ENCODE measurements at regions of chr16 and their contacts with region 1.

Region 1: DNA sequence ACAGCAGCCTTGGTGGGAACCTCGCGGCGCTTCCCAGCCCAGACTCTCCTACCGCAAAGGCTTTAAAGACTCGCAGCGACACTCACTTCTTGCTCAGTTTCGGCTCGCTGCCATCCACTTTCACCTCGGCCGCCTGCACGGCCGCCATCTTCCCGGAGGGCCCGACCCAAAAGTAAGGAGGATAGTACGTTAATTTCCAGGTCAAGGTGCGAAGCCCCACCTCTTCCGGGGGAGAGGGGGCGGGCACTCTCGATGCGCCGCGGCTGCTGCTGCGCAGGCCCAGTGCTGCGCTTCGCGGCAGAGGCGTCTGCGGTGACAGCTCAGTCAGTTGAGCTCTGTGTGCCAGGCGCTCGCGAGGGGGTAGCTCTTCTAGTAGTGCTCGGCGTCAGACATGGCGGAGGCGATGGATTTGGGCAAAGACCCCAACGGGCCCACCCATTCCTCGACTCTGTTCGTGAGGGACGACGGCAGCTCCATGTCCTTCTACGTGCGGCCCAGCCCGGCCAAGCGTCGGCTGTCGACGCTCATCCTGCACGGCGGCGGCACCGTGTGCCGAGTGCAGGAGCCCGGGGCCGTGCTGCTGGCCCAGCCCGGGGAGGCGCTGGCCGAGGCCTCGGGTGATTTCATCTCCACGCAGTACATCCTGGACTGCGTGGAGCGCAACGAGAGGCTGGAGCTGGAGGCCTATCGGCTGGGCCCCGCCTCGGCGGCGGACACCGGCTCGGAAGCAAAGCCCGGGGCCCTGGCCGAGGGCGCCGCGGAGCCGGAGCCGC is at the starts of genes KARS1 and TERF2IP:
- DNase-seq: peak; percentile 93 to 94
- H3K4me3 ChIP-seq: peak within 1 kb of the TSS; percentile 84 to 100 (median 89)
- H3K27ac ChIP-seq: peak within 1 kb of the TSS; percentile 99 to 100 (median 99)
- H3K4me1 ChIP-seq: peaks cover 35 to 46% of the 10 kb centered on the region in 2 donors
- H3K27me3 ChIP-seq: no peaks in the 10 kb centered on the region
- CTCF ChIP-seq: no peak
- POLR2A ChIP-seq: peak; percentile 89 to 99
- total RNA-seq, gene KARS1: 82.9 to 105 (median 95.4) TPM
- total RNA-seq, gene TERF2IP: 96.4 to 115 (median 106) TPM

Region 2: GRCh38 chr16:75764154-75764768 is 116.6 kb after region 1 on chr16:
- intact Hi-C with region 1: loop called (anchors 10 kb)
- DNase-seq: peak; percentile 68 to 69
- H3K4me3 ChIP-seq: no peak overlapping the region
- H3K27ac ChIP-seq: no peak overlapping the region
- H3K4me1 ChIP-seq: no peaks in the 10 kb centered on the region
- H3K27me3 ChIP-seq: no peaks in the 10 kb centered on the region
- CTCF ChIP-seq: peak; percentile 34 to 94 (median 82)
- POLR2A ChIP-seq: no peak

Region 3: DNA sequence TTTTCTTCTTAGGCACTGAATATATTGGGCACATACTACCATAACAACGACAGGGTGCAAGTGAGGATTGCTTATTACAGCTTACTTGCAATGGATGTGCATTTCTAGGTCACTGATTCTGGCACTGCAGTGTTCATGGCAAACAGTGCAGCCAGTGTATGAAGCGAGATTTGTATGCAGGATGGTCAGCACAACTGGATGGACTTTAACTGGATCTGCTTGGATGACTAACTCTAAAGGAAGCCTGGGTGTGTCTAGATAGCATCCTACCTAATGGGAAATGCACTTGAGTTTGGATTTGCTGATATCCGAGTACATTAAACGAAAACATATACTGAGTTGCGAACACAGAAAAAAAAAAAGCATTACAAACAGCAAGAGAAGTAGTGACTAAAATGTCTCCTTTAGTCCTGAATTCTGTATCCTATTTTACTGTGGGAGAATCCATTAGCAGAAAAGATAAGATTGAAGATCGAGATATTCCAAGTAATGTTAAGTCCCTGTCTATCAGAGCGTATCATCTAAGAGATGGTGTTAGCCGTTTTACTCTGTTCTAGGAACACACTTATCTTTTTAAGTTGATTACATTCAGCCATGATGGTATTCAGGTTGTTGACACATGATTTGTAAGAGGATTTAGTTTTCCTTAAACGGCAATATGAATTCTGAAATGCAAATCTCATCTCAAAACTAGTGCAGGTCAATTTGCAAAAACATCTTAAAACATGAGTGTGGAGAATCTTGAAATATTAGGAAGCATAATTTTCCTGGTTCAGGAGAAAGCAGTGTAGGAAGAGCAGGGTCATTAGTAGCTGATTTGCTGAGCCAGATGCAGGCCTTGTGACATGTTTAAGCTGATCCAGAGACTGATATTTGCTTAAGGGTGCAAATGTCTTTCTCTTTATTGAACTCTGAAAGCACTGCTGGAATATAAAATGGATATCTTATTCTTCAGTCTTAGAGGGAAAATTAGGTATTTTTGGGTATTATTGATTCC is 221.3 kb after region 1 on chr16:
- intact Hi-C with region 1: no loop called
- DNase-seq: no peak
- H3K4me3 ChIP-seq: no peak overlapping the region
- H3K27ac ChIP-seq: no peak overlapping the region
- H3K4me1 ChIP-seq: no peaks in the 10 kb centered on the region
- H3K27me3 ChIP-seq: no peaks in the 10 kb centered on the region
- CTCF ChIP-seq: no peak
- POLR2A ChIP-seq: no peak

Region 4: DNA sequence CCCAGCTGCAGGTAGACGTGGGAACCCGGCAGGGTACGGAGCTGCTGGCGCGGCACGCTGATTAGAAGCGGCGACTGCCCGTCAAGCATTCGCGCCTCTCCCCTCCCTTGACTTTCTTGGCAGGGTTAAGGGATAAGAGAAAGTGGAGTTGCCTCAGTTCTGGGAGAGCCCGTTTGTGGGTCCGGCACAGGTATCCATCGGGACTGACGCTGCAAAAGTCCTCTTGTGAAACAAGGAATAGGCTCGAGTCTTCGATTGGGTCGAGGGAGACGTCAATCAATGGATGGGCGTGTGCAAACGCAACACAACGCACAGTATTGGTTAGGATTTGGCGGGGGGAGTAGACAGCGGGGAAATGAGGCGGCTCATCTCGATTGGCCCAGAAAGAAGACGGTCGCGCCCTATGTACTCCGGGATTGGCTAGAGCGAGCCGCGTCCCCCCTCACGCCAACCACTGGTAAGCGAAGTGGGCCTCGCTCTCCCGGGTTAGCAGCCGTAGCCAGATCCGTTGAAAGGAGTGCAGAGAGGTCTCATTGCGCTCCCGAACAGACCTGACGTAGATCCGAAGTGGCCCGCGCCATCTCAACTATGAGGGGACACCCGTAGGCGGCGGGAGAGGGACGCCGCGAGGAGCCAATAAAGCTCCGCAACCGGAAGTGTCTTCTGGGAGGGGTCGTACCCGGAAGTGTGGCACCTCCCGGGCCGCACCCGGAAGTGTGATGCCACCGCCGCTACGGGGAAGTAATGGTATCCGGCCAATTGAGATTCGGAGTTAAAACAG is 1543.0 kb after region 1 on chr16 and contains the start of gene MON1B:
- intact Hi-C with region 1: loop called (anchors 5 kb)
- DNase-seq: peak; percentile 99
- H3K4me3 ChIP-seq: peak within 1 kb of the TSS; percentile 66 to 98 (median 72)
- H3K27ac ChIP-seq: peak within 1 kb of the TSS; percentile 70 to 97 (median 94)
- H3K4me1 ChIP-seq: peaks cover 12 to 14% of the 10 kb centered on the region in 2 donors
- H3K27me3 ChIP-seq: no peaks in the 10 kb centered on the region
- CTCF ChIP-seq: peak in 2 of 6 experiments; percentile 3 to 39
- POLR2A ChIP-seq: peak in 1 of 2 donors; percentile 83
- total RNA-seq, gene MON1B: 24.1 to 51.4 (median 40.7) TPM